Activated CD4-positive, alpha-beta T cell treated with anti-CD3 and anti-CD28 coated beads, Interleukin-2, amount 10 ng/mL, durations not matched to agents 24 days and 14 days (primary cell): ENCODE measurements at regions of chr2 and their contacts with region 1.

Region 1: GRCh38 chr2:143730155-143730952 is 601.1 kb downstream of the ARHGAP15 start:
- DNase-seq: peak; percentile 63
- H3K4me3 Mint-ChIP-seq: peak overlapping the region; percentile 47
- H3K27ac Mint-ChIP-seq: peak overlapping the region; percentile 92
- H3K4me1 Mint-ChIP-seq: peaks cover 31% of the 10 kb centered on the region
- H3K27me3 Mint-ChIP-seq: no peaks in the 10 kb centered on the region

Region 2: GRCh38 chr2:143158551-143159485 is 571.5 kb before region 1 on chr2:
- intact Hi-C with region 1: no loop called
- DNase-seq: no peak
- H3K4me3 Mint-ChIP-seq: peak overlapping the region; percentile 1
- H3K27ac Mint-ChIP-seq: peak overlapping the region; percentile 14
- H3K4me1 Mint-ChIP-seq: peaks cover 55% of the 10 kb centered on the region
- H3K27me3 Mint-ChIP-seq: no peaks in the 10 kb centered on the region

Region 3: DNA sequence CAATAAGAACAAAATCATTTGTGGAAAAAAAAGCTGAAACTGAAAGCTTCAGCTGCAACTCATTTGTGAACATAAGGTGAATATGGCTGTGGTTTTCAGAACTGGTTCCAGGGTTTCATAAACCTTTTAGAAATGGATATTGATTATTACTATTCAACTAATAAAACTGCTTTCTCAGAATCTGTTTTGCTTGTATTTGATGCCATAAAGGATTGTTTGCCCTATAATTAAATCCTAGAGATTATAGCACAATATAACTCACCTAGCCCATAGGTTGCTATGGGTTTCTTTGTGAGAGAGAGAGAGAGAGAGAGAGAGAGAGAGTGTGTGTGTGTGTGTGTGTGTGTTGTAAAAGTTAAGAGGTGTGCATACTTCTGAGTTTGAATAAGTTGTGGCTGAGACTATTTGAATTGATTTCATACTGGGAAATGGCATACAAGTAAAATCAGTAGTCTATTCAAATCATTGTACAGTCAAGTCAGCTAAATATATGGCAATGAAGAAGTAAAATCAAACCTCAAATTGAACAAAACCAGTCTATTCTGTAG is 261.9 kb before region 1 on chr2:
- intact Hi-C with region 1: loop called (anchors 1 kb)
- DNase-seq: no peak
- H3K4me3 Mint-ChIP-seq: no peak overlapping the region
- H3K27ac Mint-ChIP-seq: peak overlapping the region; percentile 81
- H3K4me1 Mint-ChIP-seq: peaks cover 18% of the 10 kb centered on the region
- H3K27me3 Mint-ChIP-seq: no peaks in the 10 kb centered on the region

Region 4: DNA sequence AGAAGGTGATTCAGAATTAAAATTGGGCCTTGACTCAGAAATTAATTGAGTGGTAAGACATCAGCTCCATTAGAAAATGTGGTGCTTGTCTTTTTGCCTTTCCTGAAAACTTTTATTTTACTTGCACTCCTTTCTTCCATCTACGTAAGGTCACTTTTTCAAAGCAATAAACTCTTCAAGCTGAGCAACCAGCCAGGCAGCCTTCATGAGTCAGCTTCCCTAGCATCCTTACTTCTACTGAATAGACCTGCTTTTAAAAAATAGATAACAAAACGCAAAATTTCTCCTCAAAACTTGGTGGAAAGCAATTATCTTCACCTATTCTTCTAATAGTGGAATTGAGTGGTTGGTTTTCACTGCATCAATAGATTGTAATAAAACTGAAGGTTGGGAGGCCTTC is 96.9 kb before region 1 on chr2:
- intact Hi-C with region 1: loop called (anchors 5 kb)
- DNase-seq: no peak
- H3K4me3 Mint-ChIP-seq: no peak overlapping the region
- H3K27ac Mint-ChIP-seq: peak overlapping the region; percentile 13
- H3K4me1 Mint-ChIP-seq: peaks cover 11% of the 10 kb centered on the region
- H3K27me3 Mint-ChIP-seq: no peaks in the 10 kb centered on the region

Region 5: GRCh38 chr2:143674051-143674450 is 56.3 kb before region 1 on chr2:
- intact Hi-C with region 1: loop called (anchors 2 kb)
- DNase-seq: no peak
- H3K4me3 Mint-ChIP-seq: no peak overlapping the region
- H3K27ac Mint-ChIP-seq: peak overlapping the region; percentile 13
- H3K4me1 Mint-ChIP-seq: peaks cover 3% of the 10 kb centered on the region
- H3K27me3 Mint-ChIP-seq: no peaks in the 10 kb centered on the region

Region 6: DNA sequence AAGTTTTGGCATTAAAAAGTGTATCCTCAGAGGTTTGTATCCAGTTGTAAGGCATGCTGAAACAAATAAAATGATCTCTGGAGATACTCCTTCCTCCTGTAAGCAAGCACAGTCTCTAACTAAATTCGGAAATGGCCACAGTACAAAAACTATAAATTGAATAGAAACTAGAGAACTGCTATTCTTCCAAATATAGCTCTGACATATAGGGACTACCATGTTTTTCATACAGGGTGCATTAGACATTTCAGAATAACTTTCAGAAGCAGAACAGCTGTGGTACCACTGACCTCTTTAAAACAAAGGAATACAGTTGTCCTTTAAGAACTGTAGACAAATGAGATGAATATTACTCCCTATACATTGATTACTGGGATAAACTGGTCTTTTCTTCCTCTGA is 32.6 kb before region 1 on chr2:
- intact Hi-C with region 1: loop called (anchors 1 kb)
- DNase-seq: no peak
- H3K4me3 Mint-ChIP-seq: no peak overlapping the region
- H3K27ac Mint-ChIP-seq: peak overlapping the region; percentile 80
- H3K4me1 Mint-ChIP-seq: peaks cover 12% of the 10 kb centered on the region
- H3K27me3 Mint-ChIP-seq: no peaks in the 10 kb centered on the region

Region 7: GRCh38 chr2:143705108-143705686 is 25.2 kb before region 1 on chr2:
- intact Hi-C with region 1: loop called (anchors 1 kb)
- DNase-seq: no peak
- H3K4me3 Mint-ChIP-seq: no peak overlapping the region
- H3K27ac Mint-ChIP-seq: peak overlapping the region; percentile 25
- H3K4me1 Mint-ChIP-seq: peaks cover 16% of the 10 kb centered on the region
- H3K27me3 Mint-ChIP-seq: no peaks in the 10 kb centered on the region

Region 8: GRCh38 chr2:144382849-144383248 is 652.5 kb after region 1 on chr2:
- intact Hi-C with region 1: loop called (anchors 1 kb)
- DNase-seq: peak; percentile 74
- H3K4me3 Mint-ChIP-seq: no peak overlapping the region
- H3K27ac Mint-ChIP-seq: peak overlapping the region; percentile 78
- H3K4me1 Mint-ChIP-seq: peaks cover 21% of the 10 kb centered on the region
- H3K27me3 Mint-ChIP-seq: peaks cover 7% of the 10 kb centered on the region